ENCODE measurements at regions of chr4 and their contacts with region 1.

Region 1: DNA sequence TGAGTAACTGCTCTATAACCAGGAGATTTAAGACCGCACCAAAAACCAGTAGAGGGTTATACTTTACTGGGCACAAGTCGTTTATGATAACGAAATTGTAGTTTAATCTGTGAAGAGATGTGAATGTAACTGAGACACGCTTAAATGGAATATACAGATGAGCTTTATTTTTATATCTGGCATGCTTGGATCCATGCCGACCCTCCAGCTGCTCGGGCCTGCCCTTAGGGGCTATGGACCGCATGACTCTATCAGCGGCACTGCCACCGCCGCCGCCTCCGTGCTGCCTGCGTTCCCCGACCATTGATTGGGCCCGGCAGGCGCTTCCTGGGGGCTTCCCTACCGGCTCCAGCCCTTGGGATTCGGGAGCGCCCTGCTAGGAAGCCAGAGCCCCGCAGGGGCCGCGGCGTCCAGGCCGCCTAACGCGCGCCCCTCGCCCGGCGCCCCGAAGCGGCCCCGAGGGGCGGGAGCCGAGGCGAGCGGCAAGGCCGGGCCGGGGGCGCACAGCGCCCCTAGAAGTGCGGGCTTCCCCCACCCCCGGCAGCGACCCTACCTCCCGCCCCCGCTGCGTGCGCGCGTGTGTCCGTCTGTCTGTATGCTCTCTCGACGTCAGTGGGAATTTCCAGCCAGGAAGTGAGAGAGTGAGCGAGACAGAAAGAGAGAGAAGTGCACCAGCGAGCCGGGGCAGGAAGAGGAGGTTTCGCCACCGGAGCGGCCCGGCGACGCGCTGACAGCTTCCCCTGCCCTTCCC is at the start of gene NFKB1:
- DNase-seq: peak in 9 of 10 donors; percentile 37 to 69 (median 53)
- H3K4me3 ChIP-seq: peak within 1 kb of the TSS; percentile 45 to 99 (median 86)
- H3K27ac ChIP-seq: peak within 1 kb of the TSS; percentile 86 to 100 (median 99)
- H3K27me3 ChIP-seq: no peaks in the 10 kb centered on the region
- CTCF ChIP-seq: peak in 13 of 56 donors; percentile 0 to 30 (median 6)
- total RNA-seq, gene NFKB1: 13.0 to 36.6 (median 23.5) TPM

Region 2: GRCh38 chr4:102439236-102439614 is 61.6 kb before region 1 on chr4:
- intact Hi-C with region 1: loop called in 1 of 2 experiments (anchors 5 kb)
- DNase-seq: no peak
- H3K4me3 ChIP-seq: peak overlapping the region in 3 of 59 donors; percentile 5 to 11 (median 7)
- H3K27ac ChIP-seq: peak overlapping the region in 34 of 59 donors; percentile 2 to 78 (median 44)
- H3K27me3 ChIP-seq: no peaks in the 10 kb centered on the region
- CTCF ChIP-seq: no peak

Region 3: GRCh38 chr4:102564399-102565059 is 63.7 kb after region 1 on chr4:
- intact Hi-C with region 1: no loop called
- DNase-seq: no peak
- H3K4me3 ChIP-seq: no peak overlapping the region
- H3K27ac ChIP-seq: no peak overlapping the region
- H3K27me3 ChIP-seq: no peaks in the 10 kb centered on the region
- CTCF ChIP-seq: no peak

Region 4: GRCh38 chr4:102610007-102610406 is 109.1 kb after region 1 on chr4:
- intact Hi-C with region 1: loop called in 1 of 2 experiments (anchors 5 kb)
- DNase-seq: no peak
- H3K4me3 ChIP-seq: no peak overlapping the region
- H3K27ac ChIP-seq: peak overlapping the region in 35 of 59 donors; percentile 1 to 74 (median 34)
- H3K27me3 ChIP-seq: no peaks in the 10 kb centered on the region
- CTCF ChIP-seq: peak in 44 of 56 donors; percentile 6 to 62 (median 38)

Region 5: GRCh38 chr4:102760645-102761295 is 259.9 kb after region 1 on chr4 and contains the start of gene MANBA:
- intact Hi-C with region 1: loop called in 1 of 2 experiments (anchors 10 kb)
- DNase-seq: peak; percentile 65 to 89 (median 82)
- H3K4me3 ChIP-seq: peak within 1 kb of the TSS; percentile 63 to 100 (median 95)
- H3K27ac ChIP-seq: peak within 1 kb of the TSS in 58 of 59 donors; percentile 52 to 93 (median 82)
- H3K27me3 ChIP-seq: no peaks in the 10 kb centered on the region
- CTCF ChIP-seq: peak in 27 of 56 donors; percentile 4 to 48 (median 19)
- total RNA-seq, gene MANBA: 18.6 to 39.4 (median 27.7) TPM

Region 6: GRCh38 chr4:103008875-103009729 is 508.2 kb after region 1 on chr4:
- intact Hi-C with region 1: loop called in 1 of 2 experiments (anchors 5 kb)
- DNase-seq: no peak
- H3K4me3 ChIP-seq: no peak overlapping the region
- H3K27ac ChIP-seq: peak overlapping the region in 1 of 59 donors; percentile 31
- H3K27me3 ChIP-seq: no peaks in the 10 kb centered on the region
- CTCF ChIP-seq: peak; percentile 49 to 93 (median 80)

Region 7: GRCh38 chr4:103099691-103100392 is 599.0 kb after region 1 on chr4 and contains the start of gene BDH2:
- intact Hi-C with region 1: loop called in 1 of 2 experiments (anchors 5 kb)
- DNase-seq: peak in 3 of 10 donors; percentile 28 to 46 (median 30)
- H3K4me3 ChIP-seq: peak within 1 kb of the TSS; percentile 31 to 77 (median 58)
- H3K27ac ChIP-seq: peak within 1 kb of the TSS in 58 of 59 donors; percentile 13 to 89 (median 75)
- H3K27me3 ChIP-seq: no peaks in the 10 kb centered on the region
- CTCF ChIP-seq: peak; percentile 79 to 99 (median 92)
- total RNA-seq, gene BDH2: 22.2 to 79.3 (median 39.1) TPM

Measured in dorsolateral prefrontal cortex (tissue), 120 donors.